Cardiac septum (tissue), 1 donor: ENCODE measurements at regions of chr17 and their contacts with region 1.

Region 1: GRCh38 chr17:40622509-40622928 is 25.1 kb downstream of the SMARCE1 start:
- DNase-seq: no peak

Region 2: DNA sequence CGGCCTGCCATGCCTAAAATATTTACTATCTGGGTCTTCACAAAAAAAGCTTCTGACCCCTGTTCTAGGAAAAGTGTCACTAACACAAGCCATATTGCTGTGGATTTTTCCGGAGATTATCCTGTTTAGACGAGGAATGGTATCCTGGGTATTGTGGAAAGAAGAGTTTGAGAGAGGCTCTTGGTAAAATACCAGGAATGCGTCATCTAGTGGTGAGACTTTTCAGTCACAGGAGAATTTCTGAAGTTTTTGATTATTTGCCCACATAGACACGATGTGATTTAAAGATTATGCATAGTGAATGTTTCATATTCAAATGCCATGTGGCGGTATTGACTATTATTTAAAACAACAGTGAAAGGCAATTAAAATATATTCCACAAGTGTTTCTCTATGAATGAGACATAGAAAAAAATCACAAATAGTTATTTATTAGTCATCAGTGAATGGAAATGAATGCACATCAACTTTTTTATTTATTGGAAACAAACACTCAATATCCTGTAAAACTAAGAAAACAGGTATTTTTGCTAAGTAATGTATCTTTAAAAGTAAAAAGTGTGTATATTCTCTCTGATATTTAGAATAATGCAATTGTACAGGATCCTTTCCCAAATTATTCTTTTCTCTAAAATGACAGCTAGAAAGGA is 169.4 kb after region 1 on chr17:
- intact Hi-C with region 1: loop called (anchors 5 kb)
- DNase-seq: no peak

Region 3: DNA sequence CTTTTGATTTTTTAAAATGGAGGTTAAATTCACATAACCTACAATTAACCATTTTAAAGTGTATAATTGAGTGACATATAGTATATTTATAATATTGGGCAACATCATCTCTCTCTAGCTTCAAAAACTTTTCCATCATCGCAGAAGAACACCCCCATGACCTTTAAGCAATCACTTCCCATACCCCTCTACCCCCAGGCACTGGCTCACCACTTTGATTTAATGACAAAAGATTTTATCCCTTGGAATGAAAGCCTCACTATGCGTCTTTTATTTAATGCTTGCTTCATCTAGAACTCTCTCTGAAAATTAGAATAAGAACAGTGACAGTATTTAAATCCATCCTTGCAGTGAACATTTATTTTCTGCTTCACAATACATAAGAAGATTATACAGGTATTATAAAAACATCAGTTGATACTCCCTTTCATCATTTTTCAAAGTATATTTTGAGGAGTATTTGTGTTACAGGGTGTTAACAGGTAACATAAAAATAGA is 415.4 kb after region 1 on chr17:
- intact Hi-C with region 1: no loop called
- DNase-seq: no peak